GM23248 (cell line): ENCODE measurements at regions of chr5 and their contacts with region 1.

Region 1: GRCh38 chr5:945691-946551 is 53.2 kb downstream of the TRIP13 start:
- DNase-seq: peak; percentile 22
- H3K4me3 ChIP-seq: no peak overlapping the region
- H3K27ac ChIP-seq: no peak overlapping the region
- H3K4me1 ChIP-seq: no peaks in the 10 kb centered on the region
- H3K27me3 ChIP-seq: peaks cover 74% of the 10 kb centered on the region

Region 2: GRCh38 chr5:982377-983237 is 36.7 kb after region 1 on chr5:
- in situ Hi-C with region 1: no loop called
- DNase-seq: peak; percentile 38
- H3K4me3 ChIP-seq: no peak overlapping the region
- H3K27ac ChIP-seq: no peak overlapping the region
- H3K4me1 ChIP-seq: peaks cover 10% of the 10 kb centered on the region
- H3K27me3 ChIP-seq: peaks cover 13% of the 10 kb centered on the region; the same call in 1 of the 2 replicates

Region 3: GRCh38 chr5:1134478-1134877 is 188.6 kb after region 1 on chr5:
- in situ Hi-C with region 1: loop called (anchors 10 kb)
- DNase-seq: no peak
- H3K4me3 ChIP-seq: no peak overlapping the region
- H3K27ac ChIP-seq: no peak overlapping the region
- H3K4me1 ChIP-seq: no peaks in the 10 kb centered on the region
- H3K27me3 ChIP-seq: peaks cover 13% of the 10 kb centered on the region

Region 4: DNA sequence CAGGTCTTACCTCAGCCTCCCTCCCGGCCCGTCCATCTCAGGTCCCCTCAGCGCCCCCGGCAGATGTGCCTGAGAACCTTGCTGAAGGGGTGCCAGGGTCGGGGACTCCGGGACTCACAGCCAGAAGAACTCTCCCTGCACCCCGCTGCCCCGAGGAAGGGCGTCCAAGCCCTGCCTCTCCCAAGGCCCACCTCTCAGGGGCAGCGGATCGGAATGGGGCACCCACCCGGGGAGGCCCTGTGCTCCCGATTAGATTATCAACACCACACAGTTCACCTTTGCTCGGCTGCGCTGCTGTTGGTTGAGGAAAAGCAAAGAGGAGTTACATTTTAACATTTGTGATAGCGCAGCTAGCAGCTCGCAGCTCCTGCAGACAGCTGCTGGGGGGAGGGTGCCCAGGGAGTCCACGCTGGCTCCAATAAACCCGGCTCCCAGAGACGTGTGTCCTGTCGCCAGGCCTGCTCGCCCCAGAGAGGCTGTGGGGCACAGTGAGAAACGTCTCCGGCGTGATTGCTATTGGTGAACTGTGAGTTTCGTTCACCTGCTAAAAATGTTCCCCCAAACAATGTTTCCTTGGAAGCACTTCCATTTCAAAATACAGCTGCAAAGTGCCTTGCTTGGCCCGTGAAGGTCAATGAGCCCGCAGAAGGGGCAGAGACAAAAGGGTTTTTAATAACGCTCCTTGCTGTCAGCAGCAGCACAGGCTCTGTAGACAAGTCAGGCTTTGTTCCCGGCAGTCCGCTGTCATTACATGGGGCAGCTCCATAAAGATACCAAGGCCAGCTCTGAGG is 236.9 kb after region 1 on chr5:
- in situ Hi-C with region 1: no loop called
- DNase-seq: no peak
- H3K4me3 ChIP-seq: no peak overlapping the region
- H3K27ac ChIP-seq: no peak overlapping the region
- H3K4me1 ChIP-seq: no peaks in the 10 kb centered on the region
- H3K27me3 ChIP-seq: peaks cover 6% of the 10 kb centered on the region